RWPE1 (cell line): ENCODE measurements at regions of chrX and their contacts with region 1.

Region 1: GRCh38 chrX:43688586-43688985 is 32.5 kb downstream of the MAOA start:
- DNase-seq: no peak
- H3K27ac ChIP-seq: peak overlapping the region; percentile 75
- CTCF ChIP-seq: no peak

Region 2: DNA sequence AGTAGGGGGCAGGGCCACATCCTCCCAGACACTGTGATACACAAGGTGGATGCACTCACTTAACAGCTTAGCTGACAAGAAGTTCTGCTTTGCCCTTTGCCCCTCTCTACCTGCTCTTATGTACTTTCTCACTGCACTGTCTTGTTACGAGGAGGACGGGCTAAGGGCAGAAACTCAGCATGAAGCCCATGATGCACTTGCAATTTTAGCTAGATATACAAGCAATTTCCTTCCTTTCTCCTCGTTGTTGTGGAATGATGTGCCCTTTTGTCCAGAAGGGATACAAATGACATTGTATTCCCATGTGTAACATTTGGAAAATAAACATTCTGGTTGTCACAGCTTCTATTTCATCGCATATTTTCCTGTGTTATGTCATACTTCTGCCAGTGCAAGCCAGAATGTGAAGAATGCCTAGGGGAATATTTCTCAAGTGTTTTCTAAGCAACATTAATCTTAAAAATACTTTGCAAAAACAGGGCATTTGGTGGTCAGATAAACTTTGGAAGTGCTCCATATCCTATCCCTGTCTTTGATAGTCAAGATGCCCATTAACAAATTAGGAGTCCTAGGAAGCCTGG is 14.7 kb after region 1 on chrX:
- CTCF ChIA-PET with region 1: interaction called, 10 read pairs
- POLR2A ChIA-PET with region 1: no interaction called
- DNase-seq: no peak
- H3K27ac ChIP-seq: no peak overlapping the region
- CTCF ChIP-seq: no peak

Region 3: GRCh38 chrX:43849173-43849572 is 160.6 kb after region 1 on chrX:
- CTCF ChIA-PET with region 1: no interaction called
- POLR2A ChIA-PET with region 1: no interaction called
- DNase-seq: no peak
- H3K27ac ChIP-seq: no peak overlapping the region
- CTCF ChIP-seq: no peak

Region 4: DNA sequence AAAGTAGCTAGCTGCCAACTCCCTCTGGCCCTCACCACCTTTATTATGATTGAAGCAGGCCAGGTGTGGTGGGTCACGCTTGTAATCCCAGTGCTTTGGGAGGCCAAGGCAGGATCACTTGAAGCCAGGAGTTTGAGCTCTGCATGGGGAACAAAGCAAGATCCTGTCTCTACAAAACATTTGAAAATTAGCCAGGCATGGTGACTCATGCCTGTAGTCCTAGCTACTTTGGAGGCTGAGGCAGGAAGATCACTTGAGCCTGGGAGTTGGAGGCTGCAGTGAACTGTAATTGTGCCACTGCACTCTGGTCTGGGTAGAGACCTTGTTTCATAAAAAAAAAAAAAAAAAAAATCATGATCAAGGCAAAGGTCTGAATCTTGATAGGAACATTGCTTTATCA is 1979.1 kb after region 1 on chrX:
- CTCF ChIA-PET with region 1: no interaction called
- POLR2A ChIA-PET with region 1: no interaction called
- DNase-seq: no peak
- H3K27ac ChIP-seq: no peak overlapping the region
- CTCF ChIP-seq: no peak